Psoas muscle (tissue), 8 donors: ENCODE measurements at regions of chr2 and their contacts with region 1.

Region 1: GRCh38 chr2:25190536-25190935 is 22.2 kb upstream of the POMC start:
- DNase-seq: no peak
- ATAC-seq: no peak
- H3K4me3 ChIP-seq: no peak overlapping the region
- H3K27ac ChIP-seq: no peak overlapping the region
- H3K4me1 ChIP-seq: no peaks in the 10 kb centered on the region
- H3K27me3 ChIP-seq: no peaks in the 10 kb centered on the region
- CTCF ChIP-seq: no peak

Region 2: DNA sequence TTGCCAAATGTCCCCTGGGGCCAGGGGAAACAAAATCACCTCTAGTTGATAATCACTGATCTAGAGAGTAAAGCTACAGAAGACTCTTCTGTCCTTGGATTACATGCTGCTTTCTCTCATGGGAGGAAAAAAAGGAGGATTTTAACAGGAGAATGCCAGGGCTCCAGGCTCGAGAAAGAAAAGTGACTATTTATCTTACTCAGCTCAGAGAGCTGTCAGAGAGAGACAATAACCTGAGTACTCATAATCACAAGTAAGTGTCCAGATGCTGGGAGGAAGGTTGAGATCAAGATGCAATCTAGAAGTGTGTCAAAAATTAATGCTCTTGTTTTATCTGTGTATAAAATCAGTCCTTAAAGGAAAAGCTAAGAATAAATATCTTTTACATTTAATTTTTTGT is 530.7 kb before region 1 on chr2:
- intact Hi-C with region 1: no loop called
- DNase-seq: no peak
- ATAC-seq: no peak
- H3K4me3 ChIP-seq: no peak overlapping the region
- H3K27ac ChIP-seq: peak overlapping the region; percentile 73
- H3K4me1 ChIP-seq: peaks cover 46% of the 10 kb centered on the region
- H3K27me3 ChIP-seq: no peaks in the 10 kb centered on the region
- CTCF ChIP-seq: no peak

Region 3: GRCh38 chr2:24984912-24985311 is 205.6 kb before region 1 on chr2:
- intact Hi-C with region 1: loop called in 1 of 2 experiments (anchors 5 kb)
- DNase-seq: no peak
- ATAC-seq: peak in 1 of 4 donors; percentile 38
- H3K4me3 ChIP-seq: no peak overlapping the region
- H3K27ac ChIP-seq: no peak overlapping the region
- H3K4me1 ChIP-seq: no peaks in the 10 kb centered on the region
- H3K27me3 ChIP-seq: no peaks in the 10 kb centered on the region
- CTCF ChIP-seq: no peak

Region 4: GRCh38 chr2:25032094-25032493 is 158.4 kb before region 1 on chr2:
- intact Hi-C with region 1: no loop called
- DNase-seq: no peak
- ATAC-seq: peak in 1 of 4 donors; percentile 28
- H3K4me3 ChIP-seq: no peak overlapping the region
- H3K27ac ChIP-seq: peak overlapping the region; percentile 69
- H3K4me1 ChIP-seq: peaks cover 49% of the 10 kb centered on the region
- H3K27me3 ChIP-seq: no peaks in the 10 kb centered on the region
- CTCF ChIP-seq: no peak

Region 5: GRCh38 chr2:25044990-25045389 is 145.5 kb before region 1 on chr2:
- intact Hi-C with region 1: no loop called
- DNase-seq: peak; percentile 44 to 64
- ATAC-seq: peak; percentile 14 to 66 (median 53)
- H3K4me3 ChIP-seq: no peak overlapping the region
- H3K27ac ChIP-seq: no peak overlapping the region
- H3K4me1 ChIP-seq: peaks cover 29% of the 10 kb centered on the region
- H3K27me3 ChIP-seq: no peaks in the 10 kb centered on the region
- CTCF ChIP-seq: no peak